ENCODE measurements at regions of chr6 and their contacts with region 1.

Region 1: GRCh38 chr6:7201688-7202541 is 94.2 kb downstream of the RREB1 start:
- DNase-seq: peak; percentile 86 to 94 (median 91)
- ATAC-seq: peak; percentile 80
- H3K4me3 ChIP-seq: peak overlapping the region; percentile 49
- H3K27ac ChIP-seq: peak overlapping the region; percentile 96
- H3K4me1 ChIP-seq: peaks cover 11 to 35% of the 10 kb centered on the region in 2 experiments; a peak in 4 of 5 replicates
- H3K27me3 ChIP-seq: no peaks in the 10 kb centered on the region
- CTCF ChIP-seq: no peak
- EP300 ChIP-seq: peak; percentile 87
- POLR2A ChIP-seq: peak; percentile 92
- RAD21 ChIP-seq: peak; percentile 19 to 43; a peak in 2 of 4 replicates

Region 2: DNA sequence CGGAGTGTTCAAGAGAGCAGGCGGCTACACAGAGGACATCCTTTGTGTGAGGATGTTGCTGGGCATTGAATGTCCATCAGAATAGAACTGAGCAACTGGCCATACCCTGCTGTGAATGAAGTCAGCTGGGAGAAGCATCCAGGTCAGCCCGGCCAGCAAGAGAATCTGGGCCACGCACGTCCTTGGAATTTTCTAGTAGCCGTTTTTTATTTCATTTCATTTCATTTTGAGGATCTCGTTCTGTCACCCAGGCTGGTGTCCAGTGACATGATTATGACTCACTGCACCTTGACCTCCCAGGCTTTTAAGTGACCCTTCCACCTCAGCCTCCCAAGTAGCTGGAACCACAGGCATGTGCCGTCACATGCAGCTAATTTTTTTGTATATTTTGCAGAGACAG is 13.2 kb after region 1 on chr6:
- CTCF ChIA-PET with region 1: no interaction called
- POLR2A ChIA-PET with region 1: interaction called, 13 read pairs
- in situ Hi-C with region 1: no loop called
- intact Hi-C with region 1: no loop called
- DNase-seq: peak in 2 of 4 experiments; percentile 47 to 77
- ATAC-seq: peak; percentile 65
- H3K4me3 ChIP-seq: no peak overlapping the region
- H3K27ac ChIP-seq: peak overlapping the region; percentile 24; the same call in 2 of the 3 replicates
- H3K4me1 ChIP-seq: peaks cover 11 to 16% of the 10 kb centered on the region in 2 experiments
- H3K27me3 ChIP-seq: no peaks in the 10 kb centered on the region
- CTCF ChIP-seq: no peak
- EP300 ChIP-seq: no peak
- POLR2A ChIP-seq: no peak
- RAD21 ChIP-seq: no peak

Region 3: GRCh38 chr6:7568021-7568420 is 366.1 kb after region 1 on chr6:
- CTCF ChIA-PET with region 1: no interaction called
- POLR2A ChIA-PET with region 1: no interaction called
- in situ Hi-C with region 1: no loop called
- intact Hi-C with region 1: no loop called
- DNase-seq: no peak
- ATAC-seq: no peak
- H3K4me3 ChIP-seq: no peak overlapping the region
- H3K27ac ChIP-seq: no peak overlapping the region
- H3K4me1 ChIP-seq: no peaks in the 10 kb centered on the region
- H3K27me3 ChIP-seq: peaks cover 69 to 78% of the 10 kb centered on the region in 2 experiments
- CTCF ChIP-seq: no peak
- EP300 ChIP-seq: no peak
- POLR2A ChIP-seq: no peak
- RAD21 ChIP-seq: no peak

Measured in K562 (cell line).